Activated CD4-positive, alpha-beta T cell treated with anti-CD3 and anti-CD28 coated beads, Interleukin-2, amount 10 ng/mL, durations not matched to agents 24 days and 14 days (primary cell): ENCODE measurements at regions of chr2 and their contacts with region 1.

Region 1: DNA sequence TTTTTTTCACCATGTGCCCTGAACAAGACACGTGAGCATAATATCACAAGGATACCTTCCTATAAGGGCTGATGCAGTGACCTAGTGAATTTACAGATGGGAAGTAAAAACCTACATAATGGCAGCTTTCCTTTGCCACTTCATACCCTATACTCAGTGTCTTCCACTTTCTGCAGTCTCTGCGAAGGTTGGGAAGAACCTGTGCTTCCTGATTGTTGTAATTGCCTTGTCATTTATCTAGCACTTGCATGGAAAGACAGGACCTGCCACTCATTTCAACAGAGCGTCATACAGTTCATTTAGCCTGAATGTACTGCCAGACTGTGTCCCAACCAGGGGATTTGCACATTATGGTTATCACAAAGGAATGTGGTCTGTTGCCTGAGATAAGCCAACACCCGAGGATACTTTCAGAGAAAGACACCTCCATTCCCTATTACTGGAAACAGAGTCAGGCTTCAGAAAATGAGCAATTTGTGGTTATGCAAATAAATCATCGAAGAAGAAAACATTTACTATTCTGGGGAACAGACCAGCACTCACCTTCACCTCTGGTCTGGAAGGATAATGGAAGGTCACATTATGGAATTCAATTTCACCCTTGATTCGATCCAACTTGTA is 55.0 kb downstream of the ABCB11 start:
- DNase-seq: no peak
- H3K4me3 Mint-ChIP-seq: no peak overlapping the region
- H3K27ac Mint-ChIP-seq: no peak overlapping the region
- H3K4me1 Mint-ChIP-seq: no peaks in the 10 kb centered on the region
- H3K27me3 Mint-ChIP-seq: no peaks in the 10 kb centered on the region

Region 2: DNA sequence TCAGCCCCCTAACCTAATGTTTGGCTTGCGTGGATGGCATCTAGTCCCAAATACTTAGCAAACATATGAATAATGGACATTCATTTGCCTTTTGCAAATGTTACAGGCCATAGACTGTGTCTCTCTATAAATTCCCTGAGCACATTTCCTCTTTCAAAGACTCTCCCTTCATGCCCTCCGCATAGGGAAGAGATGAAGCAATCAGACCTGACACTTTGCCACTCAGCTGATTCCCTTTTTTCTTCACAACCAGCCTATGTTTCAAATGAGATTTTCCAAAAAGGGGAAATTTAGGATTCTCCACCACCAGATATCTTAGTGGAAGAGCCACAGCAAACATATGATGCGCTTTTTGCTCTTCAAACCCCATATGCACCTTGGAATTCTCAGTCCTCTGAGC is 1182.4 kb before region 1 on chr2:
- intact Hi-C with region 1: no loop called
- DNase-seq: no peak
- H3K4me3 Mint-ChIP-seq: no peak overlapping the region
- H3K27ac Mint-ChIP-seq: no peak overlapping the region
- H3K4me1 Mint-ChIP-seq: no peaks in the 10 kb centered on the region
- H3K27me3 Mint-ChIP-seq: no peaks in the 10 kb centered on the region

Region 3: DNA sequence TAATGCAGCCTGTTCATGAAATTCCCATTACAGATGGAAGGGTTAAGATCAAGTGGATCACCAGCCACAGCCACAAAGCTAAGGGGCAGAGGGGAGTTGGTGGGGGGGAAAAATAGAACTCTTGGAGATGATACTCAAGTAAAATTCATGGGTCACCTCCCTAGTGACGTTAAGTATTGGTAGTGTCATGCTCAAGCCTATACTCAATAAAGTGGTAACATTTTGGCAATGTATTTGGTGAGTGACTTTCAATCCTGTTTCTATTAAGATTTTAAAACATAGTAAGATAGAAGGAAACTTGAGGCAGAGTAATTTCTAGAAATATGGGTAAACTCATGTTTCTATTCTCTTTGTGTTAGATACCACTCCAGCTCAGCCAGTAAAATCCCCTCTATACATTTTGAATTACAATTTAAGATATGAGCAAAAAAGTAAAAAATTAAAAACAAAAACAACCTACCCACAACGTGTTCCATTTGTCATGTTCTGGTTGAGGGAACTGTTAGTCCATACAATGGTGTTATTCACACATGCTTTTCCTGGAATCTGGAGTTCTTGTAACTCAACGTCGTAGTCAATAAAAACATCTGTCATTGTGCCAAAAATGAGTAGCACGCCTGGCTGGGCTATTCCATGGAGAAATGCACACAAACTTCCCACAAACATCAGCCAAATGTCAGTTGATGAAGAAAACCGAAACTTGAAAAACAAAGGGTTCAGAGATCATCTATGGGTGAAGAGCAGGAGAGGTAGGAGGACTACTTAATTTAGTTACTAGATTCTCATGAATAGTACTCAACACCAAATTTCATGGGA is 36.9 kb after region 1 on chr2:
- intact Hi-C with region 1: no loop called
- DNase-seq: no peak
- H3K4me3 Mint-ChIP-seq: no peak overlapping the region
- H3K27ac Mint-ChIP-seq: peak overlapping the region; percentile 56
- H3K4me1 Mint-ChIP-seq: peaks cover 5% of the 10 kb centered on the region
- H3K27me3 Mint-ChIP-seq: no peaks in the 10 kb centered on the region

Region 4: GRCh38 chr2:169562519-169562918 is 586.4 kb after region 1 on chr2:
- intact Hi-C with region 1: loop called (anchors 2 kb)
- DNase-seq: no peak
- H3K4me3 Mint-ChIP-seq: no peak overlapping the region
- H3K27ac Mint-ChIP-seq: no peak overlapping the region
- H3K4me1 Mint-ChIP-seq: no peaks in the 10 kb centered on the region
- H3K27me3 Mint-ChIP-seq: no peaks in the 10 kb centered on the region